ENCODE measurements at regions of chr3 and their contacts with region 1.

Region 1: GRCh38 chr3:179811321-179812095 is 158.7 kb downstream of the USP13 start:
- DNase-seq: peak; percentile 93
- ATAC-seq: peak; percentile 94
- H3K4me3 ChIP-seq: peak overlapping the region; percentile 20; the same call in 1 of the 2 replicates
- H3K27ac ChIP-seq: no peak overlapping the region
- H3K4me1 ChIP-seq: peaks cover 2% of the 10 kb centered on the region; the same call in 1 of the 2 replicates
- H3K27me3 ChIP-seq: no peaks in the 10 kb centered on the region
- CTCF ChIP-seq: peak; percentile 78
- POLR2A ChIP-seq: no peak
- RAD21 ChIP-seq: peak; percentile 76

Region 2: DNA sequence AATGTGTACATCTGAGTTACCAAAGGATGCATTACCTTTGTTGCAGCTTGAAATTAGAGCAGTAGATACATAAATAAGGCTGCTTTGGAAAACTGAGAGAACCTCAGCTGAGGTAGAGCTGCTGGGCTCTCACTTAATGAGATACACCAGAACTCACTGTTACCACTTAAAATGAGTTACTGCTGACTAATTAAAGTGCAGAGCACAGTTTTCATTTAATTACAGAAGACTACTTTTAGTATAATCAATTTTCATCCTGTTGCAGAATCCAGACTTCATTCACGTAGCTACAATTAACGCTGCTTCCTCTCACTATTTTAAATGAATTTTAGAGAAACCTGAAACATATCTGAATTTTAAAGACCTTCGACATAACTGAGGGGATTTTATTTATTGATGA is 10.8 kb after region 1 on chr3:
- CTCF ChIA-PET with region 1: interaction called, 13 read pairs
- POLR2A ChIA-PET with region 1: no interaction called
- dilution Hi-C with region 1: no loop called
- in situ Hi-C with region 1: no loop called
- intact Hi-C with region 1: no loop called
- DNase-seq: no peak
- ATAC-seq: no peak
- H3K4me3 ChIP-seq: no peak overlapping the region
- H3K27ac ChIP-seq: no peak overlapping the region
- H3K4me1 ChIP-seq: no peaks in the 10 kb centered on the region
- H3K27me3 ChIP-seq: peaks cover 2% of the 10 kb centered on the region
- CTCF ChIP-seq: no peak
- POLR2A ChIP-seq: no peak
- RAD21 ChIP-seq: no peak

Region 3: DNA sequence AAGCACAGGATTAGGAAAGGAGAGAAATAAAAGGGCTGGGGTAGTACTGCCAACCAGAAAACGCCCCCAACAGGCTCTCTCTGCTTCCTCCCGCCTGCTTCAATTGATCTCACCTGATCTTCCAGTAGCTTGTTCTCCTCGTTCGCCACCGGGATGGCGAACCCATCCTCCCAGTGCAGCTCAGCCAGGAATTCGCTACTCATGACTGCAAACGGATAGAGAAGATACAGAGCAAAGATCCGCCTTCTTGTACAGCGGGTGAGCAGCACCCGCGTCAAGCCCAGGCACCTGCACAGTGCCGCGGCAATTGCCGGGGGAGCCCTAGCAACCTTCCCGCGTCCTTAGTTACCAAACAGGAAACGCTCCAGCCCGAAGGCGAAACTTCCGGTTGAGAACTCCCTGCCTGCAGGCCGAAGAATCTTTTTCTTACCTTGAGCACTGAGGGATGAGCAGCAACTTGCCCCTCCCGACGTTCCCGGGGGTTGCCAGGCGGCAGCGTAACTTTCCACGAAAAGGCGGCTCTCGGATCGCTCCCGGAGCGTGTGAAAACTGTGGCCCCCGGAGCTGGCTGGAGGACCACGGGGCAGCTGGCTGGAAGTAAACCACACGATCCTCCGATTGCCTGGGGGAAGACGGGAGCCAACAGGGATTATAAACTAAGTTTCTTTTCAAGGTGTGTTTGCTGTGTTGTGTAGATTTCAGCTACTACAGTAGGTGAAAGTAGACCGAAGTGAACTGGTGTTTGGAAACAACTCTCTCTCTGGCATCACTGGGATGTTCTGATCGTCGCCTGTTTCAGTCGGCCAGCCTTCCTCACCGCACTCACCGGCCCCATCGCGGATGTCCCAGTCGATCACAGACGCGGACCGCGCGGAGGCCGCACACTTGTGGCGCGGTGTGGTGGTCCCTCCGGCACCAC is 867.9 kb after region 1 on chr3 and contains the start of gene CCDC39:
- CTCF ChIA-PET with region 1: no interaction called
- POLR2A ChIA-PET with region 1: no interaction called
- dilution Hi-C with region 1: no loop called
- in situ Hi-C with region 1: no loop called
- intact Hi-C with region 1: loop called (anchors 5 kb)
- DNase-seq: peak; percentile 49
- ATAC-seq: peak; percentile 89
- H3K4me3 ChIP-seq: peak within 1 kb of the TSS; percentile 69
- H3K27ac ChIP-seq: no peak within 1 kb of the TSS
- H3K4me1 ChIP-seq: no peaks in the 10 kb centered on the region
- H3K27me3 ChIP-seq: no peaks in the 10 kb centered on the region
- CTCF ChIP-seq: no peak
- POLR2A ChIP-seq: no peak
- RAD21 ChIP-seq: no peak
- total RNA-seq, gene CCDC39: not detected in 2 replicates